CD4-positive, alpha-beta memory T cell (primary cell): ENCODE measurements at regions of chr10 and their contacts with region 1.

Region 1: DNA sequence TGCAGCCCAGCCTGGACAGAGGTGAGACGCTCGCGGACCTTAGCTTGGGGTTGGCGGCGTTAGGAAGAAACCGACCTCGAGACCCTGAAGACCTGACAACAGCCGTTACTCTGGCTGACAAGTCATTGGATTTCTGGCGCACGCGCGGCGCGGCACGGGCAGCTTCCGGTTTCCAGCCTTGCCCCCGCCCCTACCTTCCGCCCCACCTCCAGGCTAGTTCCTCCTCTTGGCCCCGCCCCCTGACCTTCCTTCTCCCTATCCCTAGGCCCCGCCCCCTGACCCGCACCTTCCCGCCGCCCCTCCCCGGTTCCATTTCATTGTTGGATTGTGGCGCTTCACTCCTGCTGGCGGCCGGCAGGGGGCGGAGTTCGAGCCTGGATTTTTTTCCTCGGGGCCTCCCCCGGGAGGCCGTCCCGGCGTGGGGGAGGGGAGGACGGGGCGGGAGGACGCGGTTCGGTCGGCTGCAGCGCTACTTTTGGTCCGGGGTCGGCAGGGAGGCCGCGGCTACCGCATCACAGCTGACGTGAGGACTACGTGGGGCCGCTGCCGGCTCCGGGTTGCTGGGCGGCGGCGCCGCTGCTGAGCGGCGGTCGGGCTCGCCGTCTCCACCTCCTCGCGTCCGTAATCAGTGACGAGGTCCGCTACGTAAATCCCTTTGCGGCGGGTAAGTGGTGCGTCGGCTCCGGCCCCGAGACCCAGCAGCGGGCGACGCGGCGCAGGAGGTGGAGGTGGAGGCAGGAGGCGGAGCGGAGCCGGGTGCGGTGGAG is at the start of gene CREM:
- DNase-seq: peak; percentile 98 to 99 (median 99)
- H3K4me3 ChIP-seq: peak within 1 kb of the TSS; percentile 77 to 95
- H3K4me3 Mint-ChIP-seq: peak within 1 kb of the TSS; percentile 85 to 94 (median 90)
- H3K27ac ChIP-seq: peak within 1 kb of the TSS; percentile 99
- H3K27ac Mint-ChIP-seq: peak within 1 kb of the TSS; percentile 95 to 99 (median 98)
- H3K4me1 ChIP-seq: peaks cover 44% of the 10 kb centered on the region
- H3K4me1 Mint-ChIP-seq: peaks cover 22 to 59% (median 33%) of the 10 kb centered on the region in 4 donors
- H3K27me3 ChIP-seq: no peaks in the 10 kb centered on the region
- H3K27me3 Mint-ChIP-seq: no peaks in the 10 kb centered on the region
- total RNA-seq, gene CREM: 17.8 to 22.3 TPM

Region 2: GRCh38 chr10:34889004-34889869 is 237.5 kb before region 1 on chr10:
- CTCF ChIA-PET with region 1: no interaction called
- POLR2A ChIA-PET with region 1: no interaction called
- intact Hi-C with region 1: no loop called
- DNase-seq: no peak
- H3K4me3 ChIP-seq: no peak overlapping the region
- H3K4me3 Mint-ChIP-seq: no peak overlapping the region
- H3K27ac ChIP-seq: no peak overlapping the region
- H3K27ac Mint-ChIP-seq: no peak overlapping the region
- H3K4me1 ChIP-seq: no peaks in the 10 kb centered on the region
- H3K4me1 Mint-ChIP-seq: peaks cover 0 to 1% (median 0%) of the 10 kb centered on the region in 4 donors
- H3K27me3 ChIP-seq: no peaks in the 10 kb centered on the region
- H3K27me3 Mint-ChIP-seq: peaks cover 0 to 2% of the 10 kb centered on the region in 2 donors

Region 3: DNA sequence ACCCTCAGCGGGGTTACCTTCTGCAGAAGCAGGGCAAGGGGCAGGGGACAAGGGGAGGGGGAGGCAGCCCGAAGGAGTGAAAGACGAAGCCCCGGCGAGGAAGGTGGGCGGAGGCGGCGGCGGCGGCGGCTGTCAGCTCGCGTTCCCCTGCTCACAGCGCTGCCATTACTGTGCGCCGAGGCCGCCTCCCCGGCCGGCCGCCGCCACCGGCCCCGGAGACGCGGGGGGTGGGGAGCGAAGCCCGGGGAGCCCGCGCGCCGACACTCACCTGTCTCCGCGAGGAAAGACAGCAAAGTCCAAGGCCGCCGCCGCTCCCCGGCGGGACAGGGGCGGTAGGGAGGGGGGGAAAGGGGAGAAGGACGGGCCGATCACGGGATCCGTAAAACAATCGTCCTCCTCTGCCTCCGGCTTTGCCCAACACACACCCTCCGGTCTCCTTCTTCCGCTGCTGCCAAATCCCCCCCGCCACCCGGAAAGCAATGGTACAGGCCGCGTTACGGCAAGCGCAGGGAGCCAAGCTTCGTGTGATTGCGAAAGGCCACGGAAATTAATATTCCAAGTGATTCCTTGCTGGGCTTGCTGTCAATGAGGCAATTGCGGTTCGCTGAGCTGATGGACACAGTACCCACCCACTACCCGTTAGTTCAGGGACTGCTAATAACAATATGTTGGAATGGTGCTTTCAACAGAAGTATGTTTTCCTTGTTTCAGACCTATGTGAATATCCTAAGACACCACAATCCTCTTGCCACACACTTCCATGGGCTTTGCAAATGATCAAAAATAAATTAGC is 36.4 kb before region 1 on chr10 and contains the start of gene CUL2:
- CTCF ChIA-PET with region 1: interaction called, 4 read pairs
- POLR2A ChIA-PET with region 1: interaction called, 45 read pairs
- intact Hi-C with region 1: loop called (anchors 1 kb)
- DNase-seq: peak; percentile 91 to 97 (median 93)
- H3K4me3 ChIP-seq: peak within 1 kb of the TSS; percentile 80 to 90
- H3K4me3 Mint-ChIP-seq: peak within 1 kb of the TSS; percentile 96 to 100 (median 98)
- H3K27ac ChIP-seq: peak within 1 kb of the TSS; percentile 89
- H3K27ac Mint-ChIP-seq: peak within 1 kb of the TSS; percentile 97 to 100 (median 99)
- H3K4me1 ChIP-seq: peaks cover 48% of the 10 kb centered on the region
- H3K4me1 Mint-ChIP-seq: peaks cover 37 to 57% (median 45%) of the 10 kb centered on the region in 4 donors
- H3K27me3 ChIP-seq: no peaks in the 10 kb centered on the region
- H3K27me3 Mint-ChIP-seq: peaks cover under 1 to 1% of the 10 kb centered on the region in 2 donors
- total RNA-seq, gene CUL2: 34.6 to 37.8 TPM

Region 4: GRCh38 chr10:35178331-35178730 is 51.6 kb after region 1 on chr10:
- CTCF ChIA-PET with region 1: no interaction called
- POLR2A ChIA-PET with region 1: interaction called, 10 read pairs
- intact Hi-C with region 1: no loop called
- DNase-seq: no peak
- H3K4me3 ChIP-seq: no peak overlapping the region
- H3K4me3 Mint-ChIP-seq: no peak overlapping the region
- H3K27ac ChIP-seq: no peak overlapping the region
- H3K27ac Mint-ChIP-seq: no peak overlapping the region
- H3K4me1 ChIP-seq: no peaks in the 10 kb centered on the region
- H3K4me1 Mint-ChIP-seq: no peaks in the 10 kb centered on the region
- H3K27me3 ChIP-seq: no peaks in the 10 kb centered on the region
- H3K27me3 Mint-ChIP-seq: no peaks in the 10 kb centered on the region

Region 5: GRCh38 chr10:35208536-35208935 is 81.8 kb after region 1 on chr10:
- CTCF ChIA-PET with region 1: interaction called, 377 read pairs
- POLR2A ChIA-PET with region 1: interaction called, 25 read pairs
- intact Hi-C with region 1: no loop called
- DNase-seq: peak; percentile 10 to 56 (median 24)
- H3K4me3 ChIP-seq: peak overlapping the region in 1 of 2 donors; percentile 20
- H3K4me3 Mint-ChIP-seq: peak overlapping the region; percentile 23 to 79 (median 74)
- H3K27ac ChIP-seq: peak overlapping the region; percentile 47
- H3K27ac Mint-ChIP-seq: peak overlapping the region; percentile 73 to 97 (median 93)
- H3K4me1 ChIP-seq: peaks cover 12% of the 10 kb centered on the region
- H3K4me1 Mint-ChIP-seq: peaks cover 12 to 24% (median 15%) of the 10 kb centered on the region in 4 donors
- H3K27me3 ChIP-seq: no peaks in the 10 kb centered on the region
- H3K27me3 Mint-ChIP-seq: no peaks in the 10 kb centered on the region

Region 6: GRCh38 chr10:35336084-35336831 is 209.5 kb after region 1 on chr10 and contains the start of gene CCNY:
- CTCF ChIA-PET with region 1: interaction called, 3 read pairs
- POLR2A ChIA-PET with region 1: interaction called, 3 read pairs
- intact Hi-C with region 1: loop called (anchors 1 kb)
- DNase-seq: peak; percentile 74 to 81 (median 77)
- H3K4me3 ChIP-seq: peak within 1 kb of the TSS; percentile 38 to 57
- H3K4me3 Mint-ChIP-seq: peak within 1 kb of the TSS; percentile 89 to 93 (median 91)
- H3K27ac ChIP-seq: peak within 1 kb of the TSS; percentile 76
- H3K27ac Mint-ChIP-seq: peak within 1 kb of the TSS; percentile 91 to 95 (median 92)
- H3K4me1 ChIP-seq: peaks cover 63% of the 10 kb centered on the region
- H3K4me1 Mint-ChIP-seq: peaks cover 49 to 80% (median 65%) of the 10 kb centered on the region in 4 donors
- H3K27me3 ChIP-seq: no peaks in the 10 kb centered on the region
- H3K27me3 Mint-ChIP-seq: no peaks in the 10 kb centered on the region
- total RNA-seq, gene CCNY: 65.9 to 66.7 TPM

Region 7: DNA sequence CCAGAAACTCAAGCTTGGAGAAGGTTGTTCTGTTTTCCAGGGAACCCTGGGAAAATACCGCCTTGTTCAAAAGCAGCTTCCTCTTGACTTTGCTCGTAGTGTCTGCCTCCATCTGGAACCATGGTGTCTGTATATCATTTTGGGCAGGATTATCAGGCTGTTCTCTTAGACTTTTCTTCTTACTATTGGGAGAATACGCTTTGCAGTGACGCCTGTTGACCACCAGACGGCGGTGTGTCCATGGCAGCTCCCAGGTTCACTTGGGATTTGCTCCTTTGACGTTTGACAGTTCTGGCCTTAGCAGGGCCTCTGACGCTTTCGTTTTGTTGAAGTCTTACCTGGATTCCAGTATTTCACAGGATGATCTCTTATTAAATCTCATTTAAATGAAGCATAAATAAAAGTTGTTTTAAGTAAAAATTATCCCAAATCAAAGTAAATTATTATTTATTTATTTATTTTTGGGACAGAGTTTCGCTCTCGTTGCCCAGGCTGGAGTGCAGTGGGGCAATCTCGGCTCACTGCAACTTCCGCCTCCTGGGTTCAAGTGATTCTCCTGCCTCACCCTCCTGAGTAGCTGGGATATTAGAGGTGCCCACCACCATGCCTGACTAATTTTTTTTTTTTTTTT is 436.7 kb after region 1 on chr10:
- CTCF ChIA-PET with region 1: no interaction called
- POLR2A ChIA-PET with region 1: no interaction called
- intact Hi-C with region 1: loop called (anchors 2 kb)
- DNase-seq: peak in 4 of 5 donors; percentile 18 to 40 (median 23)
- H3K4me3 ChIP-seq: no peak overlapping the region
- H3K4me3 Mint-ChIP-seq: peak overlapping the region in 1 of 8 donors; percentile 23
- H3K27ac ChIP-seq: no peak overlapping the region
- H3K27ac Mint-ChIP-seq: peak overlapping the region in 1 of 7 donors; percentile 29
- H3K4me1 ChIP-seq: no peaks in the 10 kb centered on the region
- H3K4me1 Mint-ChIP-seq: peaks cover 5 to 9% (median 7%) of the 10 kb centered on the region in 4 donors
- H3K27me3 ChIP-seq: no peaks in the 10 kb centered on the region
- H3K27me3 Mint-ChIP-seq: no peaks in the 10 kb centered on the region

Region 8: DNA sequence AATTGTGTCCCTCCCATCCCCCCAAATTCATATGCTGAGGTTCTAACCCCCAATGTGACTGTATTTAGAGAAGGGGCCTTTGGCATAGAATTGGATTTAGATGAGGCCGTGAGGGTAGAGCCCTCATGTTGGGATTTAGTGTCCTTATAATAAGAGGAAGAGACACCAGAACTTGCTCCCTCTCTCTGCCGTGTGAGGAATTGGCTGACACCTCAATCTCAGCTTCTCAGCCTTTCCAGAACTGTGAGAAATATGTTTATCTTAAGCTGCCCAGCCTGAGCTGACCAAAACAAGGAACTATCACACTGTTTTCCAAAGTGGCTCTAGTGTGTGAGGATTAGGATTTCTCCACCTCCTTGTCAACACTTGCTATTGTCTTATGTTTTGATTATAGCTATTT is 915.4 kb after region 1 on chr10:
- CTCF ChIA-PET with region 1: no interaction called
- POLR2A ChIA-PET with region 1: no interaction called
- intact Hi-C with region 1: no loop called
- DNase-seq: no peak
- H3K4me3 ChIP-seq: no peak overlapping the region
- H3K4me3 Mint-ChIP-seq: no peak overlapping the region
- H3K27ac ChIP-seq: no peak overlapping the region
- H3K27ac Mint-ChIP-seq: no peak overlapping the region
- H3K4me1 ChIP-seq: no peaks in the 10 kb centered on the region
- H3K4me1 Mint-ChIP-seq: no peaks in the 10 kb centered on the region
- H3K27me3 ChIP-seq: no peaks in the 10 kb centered on the region
- H3K27me3 Mint-ChIP-seq: no peaks in the 10 kb centered on the region